Naive thymus-derived CD4-positive, alpha-beta T cell (primary cell): ENCODE measurements at regions of chr19 and their contacts with region 1.

Region 1: DNA sequence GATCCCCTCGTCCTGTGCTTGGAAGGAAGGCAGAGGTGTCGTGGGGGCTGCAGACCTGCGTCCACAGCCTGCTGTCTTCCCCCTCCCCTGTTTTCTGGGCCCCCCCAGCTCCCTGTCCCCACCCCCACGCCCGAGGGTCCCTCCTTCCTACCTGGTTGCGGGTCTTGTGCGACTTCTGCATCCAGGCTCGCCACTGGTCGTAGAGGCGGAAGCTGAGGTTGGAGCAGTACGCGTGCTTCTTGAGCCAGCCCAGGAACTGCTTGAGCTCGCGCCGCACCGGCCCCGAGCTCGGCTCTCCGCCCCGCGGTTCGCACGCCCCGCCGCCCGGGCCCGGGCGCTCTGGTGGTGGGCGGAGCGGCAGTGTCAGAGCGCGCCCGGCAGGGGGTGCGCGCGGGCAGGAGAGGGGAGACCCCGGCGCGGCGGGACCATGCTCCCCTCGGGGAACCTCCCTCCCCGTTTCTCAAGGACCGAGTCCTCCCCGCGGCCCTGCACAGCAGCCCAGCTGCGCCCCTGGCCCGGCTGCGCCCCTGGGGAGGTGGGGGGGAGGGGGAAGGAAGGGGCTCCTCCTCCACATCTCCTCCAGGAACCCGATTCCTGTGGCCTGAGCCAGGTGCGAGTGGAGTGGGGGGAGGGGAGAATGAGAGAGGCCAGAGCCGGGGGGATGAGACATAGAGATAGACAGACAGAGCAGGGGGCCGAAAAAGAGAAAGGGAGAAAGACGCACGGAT is 5.7 kb downstream of the REX1BD start:
- DNase-seq: peak; percentile 66 to 85 (median 72)
- ATAC-seq: peak; percentile 87
- H3K4me3 ChIP-seq: peak overlapping the region; percentile 71
- H3K4me3 Mint-ChIP-seq: peak overlapping the region; percentile 49 to 90 (median 80)
- H3K27ac ChIP-seq: peak overlapping the region; percentile 29
- H3K27ac Mint-ChIP-seq: peak overlapping the region in 4 of 9 donors; percentile 57 to 72 (median 62)
- H3K4me1 ChIP-seq: peaks cover 17 to 29% of the 10 kb centered on the region in 2 donors
- H3K4me1 Mint-ChIP-seq: peaks cover 6 to 48% (median 29%) of the 10 kb centered on the region in 7 donors
- H3K27me3 ChIP-seq: no peaks in the 10 kb centered on the region
- H3K27me3 Mint-ChIP-seq: peaks cover 0 to 23% (median under 1%) of the 10 kb centered on the region in 5 donors

Region 2: GRCh38 chr19:18203863-18204393 is 390.3 kb before region 1 on chr19 and contains the start of gene RAB3A:
- CTCF ChIA-PET with region 1: no interaction called
- POLR2A ChIA-PET with region 1: no interaction called
- intact Hi-C with region 1: no loop called
- DNase-seq: peak; percentile 95 to 100 (median 99)
- ATAC-seq: peak; percentile 95
- H3K4me3 ChIP-seq: peak within 1 kb of the TSS; percentile 90
- H3K4me3 Mint-ChIP-seq: peak within 1 kb of the TSS; percentile 83 to 98 (median 96)
- H3K27ac ChIP-seq: peak within 1 kb of the TSS; percentile 85
- H3K27ac Mint-ChIP-seq: peak within 1 kb of the TSS; percentile 87 to 99 (median 97)
- H3K4me1 ChIP-seq: peaks cover 15 to 16% of the 10 kb centered on the region in 2 donors
- H3K4me1 Mint-ChIP-seq: peaks cover 11 to 26% (median 22%) of the 10 kb centered on the region in 7 donors
- H3K27me3 ChIP-seq: no peaks in the 10 kb centered on the region
- H3K27me3 Mint-ChIP-seq: peaks cover 0 to 8% (median 0%) of the 10 kb centered on the region in 5 donors
- total RNA-seq, gene RAB3A: 5.7 to 16.7 (median 8.8) TPM

Region 3: DNA sequence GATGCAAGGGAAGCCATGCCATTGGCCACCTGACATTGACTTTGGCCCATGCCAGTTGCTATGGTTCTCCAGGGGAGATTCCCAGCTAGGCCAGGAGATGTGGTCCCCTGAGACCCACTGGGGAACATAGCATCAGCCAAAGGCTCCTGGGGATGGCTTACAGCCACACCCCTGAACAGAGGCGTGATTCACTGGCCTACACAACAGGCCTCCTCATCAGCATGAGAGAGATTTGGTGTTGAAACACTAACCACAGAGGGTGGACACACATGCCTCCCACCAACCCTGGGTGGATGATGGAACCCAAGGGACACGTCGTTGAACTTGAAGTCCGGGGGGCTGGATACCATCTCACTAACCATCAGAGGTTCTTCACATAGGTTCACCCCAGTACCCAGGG is 334.4 kb before region 1 on chr19:
- CTCF ChIA-PET with region 1: no interaction called
- POLR2A ChIA-PET with region 1: no interaction called
- intact Hi-C with region 1: no loop called
- DNase-seq: no peak
- ATAC-seq: peak; percentile 11
- H3K4me3 ChIP-seq: no peak overlapping the region
- H3K4me3 Mint-ChIP-seq: no peak overlapping the region
- H3K27ac ChIP-seq: no peak overlapping the region
- H3K27ac Mint-ChIP-seq: no peak overlapping the region
- H3K4me1 ChIP-seq: no peaks in the 10 kb centered on the region
- H3K4me1 Mint-ChIP-seq: peaks cover 0 to 10% (median 0%) of the 10 kb centered on the region in 7 donors
- H3K27me3 ChIP-seq: no peaks in the 10 kb centered on the region
- H3K27me3 Mint-ChIP-seq: peaks cover 0 to 7% (median 5%) of the 10 kb centered on the region in 5 donors

Region 4: GRCh38 chr19:18557474-18558201 is 36.6 kb before region 1 on chr19 and contains the start of gene KXD1:
- CTCF ChIA-PET with region 1: no interaction called
- POLR2A ChIA-PET with region 1: interaction called, 25 read pairs
- intact Hi-C with region 1: loop called (anchors 1 to 2 kb)
- DNase-seq: peak; percentile 89 to 99 (median 97)
- ATAC-seq: peak; percentile 100
- H3K4me3 ChIP-seq: peak within 1 kb of the TSS; percentile 84
- H3K4me3 Mint-ChIP-seq: peak within 1 kb of the TSS; percentile 83 to 93 (median 91)
- H3K27ac ChIP-seq: peak within 1 kb of the TSS; percentile 95
- H3K27ac Mint-ChIP-seq: peak within 1 kb of the TSS; percentile 87 to 97 (median 96)
- H3K4me1 ChIP-seq: peaks cover 13 to 15% of the 10 kb centered on the region in 2 donors
- H3K4me1 Mint-ChIP-seq: peaks cover 6 to 25% (median 23%) of the 10 kb centered on the region in 7 donors
- H3K27me3 ChIP-seq: no peaks in the 10 kb centered on the region
- H3K27me3 Mint-ChIP-seq: no peaks in the 10 kb centered on the region
- total RNA-seq, gene KXD1: 74.7 to 108 (median 99.9) TPM

Region 5: DNA sequence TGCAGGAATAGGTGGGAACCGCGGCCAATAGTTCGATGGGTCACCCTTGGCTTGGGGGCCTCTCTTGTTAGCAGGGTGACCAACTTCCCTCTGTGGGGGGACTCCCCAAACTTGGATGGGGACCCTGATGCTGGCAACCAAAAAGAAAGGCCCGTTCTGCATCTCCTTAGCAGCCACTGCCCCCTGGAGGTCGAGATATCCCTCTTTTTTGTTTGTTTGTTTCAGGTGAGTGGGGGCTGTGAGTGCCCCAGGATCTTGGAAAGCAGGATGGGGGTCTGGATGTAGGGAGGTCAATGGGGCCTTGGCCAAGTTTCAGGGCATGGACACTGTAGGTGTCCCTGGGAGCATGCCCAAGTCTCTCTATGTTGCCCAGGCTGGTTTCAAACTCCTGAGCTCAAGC is 81.5 kb after region 1 on chr19:
- CTCF ChIA-PET with region 1: interaction called, 3 read pairs
- POLR2A ChIA-PET with region 1: no interaction called
- intact Hi-C with region 1: loop called (anchors 1 to 5 kb)
- DNase-seq: peak in 4 of 9 donors; percentile 15 to 33 (median 22)
- ATAC-seq: no peak
- H3K4me3 ChIP-seq: no peak overlapping the region
- H3K4me3 Mint-ChIP-seq: no peak overlapping the region
- H3K27ac ChIP-seq: no peak overlapping the region
- H3K27ac Mint-ChIP-seq: no peak overlapping the region
- H3K4me1 ChIP-seq: no peaks in the 10 kb centered on the region
- H3K4me1 Mint-ChIP-seq: no peaks in the 10 kb centered on the region
- H3K27me3 ChIP-seq: no peaks in the 10 kb centered on the region
- H3K27me3 Mint-ChIP-seq: no peaks in the 10 kb centered on the region

Region 6: DNA sequence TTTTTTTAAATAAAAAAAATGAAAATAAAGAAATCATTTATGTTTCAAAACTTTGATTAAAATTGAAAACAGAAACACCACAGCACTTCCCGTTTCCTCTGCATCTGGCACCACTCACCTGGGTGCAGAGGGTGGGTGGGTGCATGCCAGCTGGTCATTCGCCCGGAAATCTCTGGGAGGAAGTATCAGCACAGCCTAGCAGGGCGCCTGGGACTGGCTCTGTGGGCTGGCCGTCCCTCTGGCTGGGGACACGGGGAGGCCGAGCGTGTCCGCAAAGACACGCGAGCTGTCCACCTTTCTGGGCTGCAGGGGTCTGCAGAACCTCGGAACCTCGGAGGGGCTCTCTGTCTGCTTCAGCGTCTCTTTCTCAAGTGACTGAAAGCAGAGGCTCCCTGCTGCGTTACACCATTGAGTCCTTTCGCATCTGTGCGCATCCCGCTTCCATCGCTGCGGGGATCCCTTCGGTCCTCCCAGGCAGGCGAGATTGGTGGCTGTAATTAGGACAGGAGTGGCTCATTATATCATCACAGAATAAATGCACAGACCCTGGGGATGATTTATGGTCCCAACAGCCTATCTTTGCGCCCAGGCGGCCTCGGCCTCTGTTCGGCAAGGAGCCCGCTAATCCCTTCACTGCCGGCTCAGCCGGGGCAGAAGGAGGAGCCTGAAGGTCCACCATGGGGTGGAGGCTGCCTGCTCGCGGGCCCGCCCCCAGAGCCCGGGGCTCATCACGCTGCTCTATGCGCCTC is 106.4 kb after region 1 on chr19:
- CTCF ChIA-PET with region 1: no interaction called
- POLR2A ChIA-PET with region 1: no interaction called
- intact Hi-C with region 1: loop called in 1 of 2 experiments (anchors 2 kb)
- DNase-seq: peak; percentile 50 to 76 (median 68)
- ATAC-seq: peak; percentile 97
- H3K4me3 ChIP-seq: peak overlapping the region; percentile 71
- H3K4me3 Mint-ChIP-seq: peak overlapping the region; percentile 84 to 95 (median 91)
- H3K27ac ChIP-seq: peak overlapping the region; percentile 76
- H3K27ac Mint-ChIP-seq: peak overlapping the region; percentile 39 to 98 (median 94)
- H3K4me1 ChIP-seq: peaks cover 24 to 38% of the 10 kb centered on the region in 2 donors
- H3K4me1 Mint-ChIP-seq: peaks cover 15 to 52% (median 36%) of the 10 kb centered on the region in 7 donors
- H3K27me3 ChIP-seq: no peaks in the 10 kb centered on the region
- H3K27me3 Mint-ChIP-seq: peaks cover 0 to 4% (median 0%) of the 10 kb centered on the region in 5 donors

Region 7: DNA sequence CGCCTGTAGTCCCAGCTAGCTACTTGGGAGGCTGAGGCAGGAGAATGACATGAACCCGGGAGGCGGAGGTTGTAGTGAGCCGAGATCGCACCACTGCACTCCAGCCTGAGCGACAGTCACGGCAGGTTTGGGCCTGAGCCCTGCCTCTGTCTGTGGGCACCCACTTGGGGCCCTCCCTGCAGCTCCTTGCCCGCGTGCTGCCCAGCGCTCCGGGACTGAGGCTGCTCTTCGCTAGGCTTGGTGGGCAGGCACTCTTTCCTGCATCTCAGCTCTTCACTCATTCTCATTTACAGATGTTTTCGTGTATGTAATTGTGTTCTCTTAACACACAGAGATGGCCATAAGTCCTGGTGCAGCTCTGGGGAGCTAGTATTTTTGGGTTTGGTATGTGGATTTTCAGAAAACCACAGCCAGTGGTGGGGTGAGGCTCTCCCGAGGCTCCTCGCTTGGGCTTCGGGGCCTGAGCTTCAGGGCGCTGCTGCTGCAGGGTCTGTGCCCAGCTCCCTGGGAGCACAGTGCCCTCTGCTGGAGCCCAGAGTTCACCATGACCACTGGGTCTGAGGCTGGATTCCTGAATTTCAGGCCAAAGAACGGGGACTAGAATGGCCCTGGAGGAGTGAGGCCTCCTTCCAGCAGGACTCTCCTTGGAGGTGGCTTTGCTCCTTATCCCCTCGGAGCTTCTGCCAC is 252.7 kb after region 1 on chr19:
- CTCF ChIA-PET with region 1: interaction called, 20 read pairs
- POLR2A ChIA-PET with region 1: interaction called, 10 read pairs
- intact Hi-C with region 1: loop called (anchors 1 to 5 kb)
- DNase-seq: peak; percentile 45 to 70 (median 57)
- ATAC-seq: peak; percentile 83
- H3K4me3 ChIP-seq: no peak overlapping the region
- H3K4me3 Mint-ChIP-seq: peak overlapping the region in 8 of 10 donors; percentile 27 to 71 (median 56)
- H3K27ac ChIP-seq: no peak overlapping the region
- H3K27ac Mint-ChIP-seq: peak overlapping the region in 8 of 9 donors; percentile 23 to 83 (median 69)
- H3K4me1 ChIP-seq: peaks cover 32 to 34% of the 10 kb centered on the region in 2 donors
- H3K4me1 Mint-ChIP-seq: peaks cover 49 to 65% (median 54%) of the 10 kb centered on the region in 7 donors
- H3K27me3 ChIP-seq: no peaks in the 10 kb centered on the region
- H3K27me3 Mint-ChIP-seq: no peaks in the 10 kb centered on the region

Region 8: GRCh38 chr19:18865973-18866799 is 271.9 kb after region 1 on chr19:
- CTCF ChIA-PET with region 1: interaction called, 3 read pairs
- POLR2A ChIA-PET with region 1: no interaction called
- intact Hi-C with region 1: loop called in 1 of 2 experiments (anchors 1 kb)
- DNase-seq: peak; percentile 36 to 78 (median 60)
- ATAC-seq: peak; percentile 89
- H3K4me3 ChIP-seq: no peak overlapping the region
- H3K4me3 Mint-ChIP-seq: no peak overlapping the region
- H3K27ac ChIP-seq: no peak overlapping the region
- H3K27ac Mint-ChIP-seq: peak overlapping the region in 1 of 9 donors; percentile 69
- H3K4me1 ChIP-seq: no peaks in the 10 kb centered on the region
- H3K4me1 Mint-ChIP-seq: peaks cover 0 to 8% (median 7%) of the 10 kb centered on the region in 7 donors
- H3K27me3 ChIP-seq: no peaks in the 10 kb centered on the region
- H3K27me3 Mint-ChIP-seq: peaks cover 0 to 6% (median 4%) of the 10 kb centered on the region in 5 donors